ENCODE measurements at regions of chr18 and their contacts with region 1.

Region 1: GRCh38 chr18:50009773-50010335 is 185.1 kb downstream of the MYO5B start:
- DNase-seq: peak; percentile 71
- H3K4me3 ChIP-seq: no peak overlapping the region
- H3K27ac ChIP-seq: no peak overlapping the region
- H3K4me1 ChIP-seq: no peaks in the 10 kb centered on the region
- H3K27me3 ChIP-seq: no peaks in the 10 kb centered on the region
- CTCF ChIP-seq: peak; percentile 43 to 83 (median 60)
- EP300 ChIP-seq: no peak
- POLR2A ChIP-seq: no peak

Region 2: GRCh38 chr18:49907346-49907929 is 102.4 kb before region 1 on chr18:
- in situ Hi-C with region 1: no loop called
- intact Hi-C with region 1: no loop called
- DNase-seq: no peak
- H3K4me3 ChIP-seq: no peak overlapping the region
- H3K27ac ChIP-seq: no peak overlapping the region
- H3K4me1 ChIP-seq: no peaks in the 10 kb centered on the region
- H3K27me3 ChIP-seq: no peaks in the 10 kb centered on the region
- CTCF ChIP-seq: no peak
- EP300 ChIP-seq: no peak
- POLR2A ChIP-seq: no peak

Region 3: GRCh38 chr18:50194631-50195532 is 185.0 kb after region 1 on chr18 and contains the start of gene MYO5B:
- in situ Hi-C with region 1: loop called in 3 of 4 experiments (anchors 10 to 25 kb)
- intact Hi-C with region 1: no loop called
- DNase-seq: peak; percentile 91
- H3K4me3 ChIP-seq: peak within 1 kb of the TSS; percentile 57 to 89 (median 72)
- H3K27ac ChIP-seq: peak within 1 kb of the TSS; percentile 72 to 95 (median 92)
- H3K4me1 ChIP-seq: peaks cover 0 to 30% (median 9%) of the 10 kb centered on the region in 4 donors
- H3K27me3 ChIP-seq: peaks cover 52% of the 10 kb centered on the region
- CTCF ChIP-seq: peak; percentile 13 to 39 (median 36)
- EP300 ChIP-seq: no peak
- POLR2A ChIP-seq: peak; percentile 84
- total RNA-seq, gene MYO5B: 96.7 to 144 (median 114) TPM

Region 4: GRCh38 chr18:50203801-50204604 is 194.1 kb after region 1 on chr18:
- in situ Hi-C with region 1: loop called in 3 of 4 experiments (anchors 10 to 25 kb)
- intact Hi-C with region 1: no loop called
- DNase-seq: peak; percentile 60
- H3K4me3 ChIP-seq: no peak overlapping the region
- H3K27ac ChIP-seq: no peak overlapping the region
- H3K4me1 ChIP-seq: peaks cover 0 to 5% (median 0%) of the 10 kb centered on the region in 4 donors
- H3K27me3 ChIP-seq: peaks cover 6% of the 10 kb centered on the region
- CTCF ChIP-seq: peak; percentile 42 to 64 (median 56)
- EP300 ChIP-seq: no peak
- POLR2A ChIP-seq: no peak

Region 5: DNA sequence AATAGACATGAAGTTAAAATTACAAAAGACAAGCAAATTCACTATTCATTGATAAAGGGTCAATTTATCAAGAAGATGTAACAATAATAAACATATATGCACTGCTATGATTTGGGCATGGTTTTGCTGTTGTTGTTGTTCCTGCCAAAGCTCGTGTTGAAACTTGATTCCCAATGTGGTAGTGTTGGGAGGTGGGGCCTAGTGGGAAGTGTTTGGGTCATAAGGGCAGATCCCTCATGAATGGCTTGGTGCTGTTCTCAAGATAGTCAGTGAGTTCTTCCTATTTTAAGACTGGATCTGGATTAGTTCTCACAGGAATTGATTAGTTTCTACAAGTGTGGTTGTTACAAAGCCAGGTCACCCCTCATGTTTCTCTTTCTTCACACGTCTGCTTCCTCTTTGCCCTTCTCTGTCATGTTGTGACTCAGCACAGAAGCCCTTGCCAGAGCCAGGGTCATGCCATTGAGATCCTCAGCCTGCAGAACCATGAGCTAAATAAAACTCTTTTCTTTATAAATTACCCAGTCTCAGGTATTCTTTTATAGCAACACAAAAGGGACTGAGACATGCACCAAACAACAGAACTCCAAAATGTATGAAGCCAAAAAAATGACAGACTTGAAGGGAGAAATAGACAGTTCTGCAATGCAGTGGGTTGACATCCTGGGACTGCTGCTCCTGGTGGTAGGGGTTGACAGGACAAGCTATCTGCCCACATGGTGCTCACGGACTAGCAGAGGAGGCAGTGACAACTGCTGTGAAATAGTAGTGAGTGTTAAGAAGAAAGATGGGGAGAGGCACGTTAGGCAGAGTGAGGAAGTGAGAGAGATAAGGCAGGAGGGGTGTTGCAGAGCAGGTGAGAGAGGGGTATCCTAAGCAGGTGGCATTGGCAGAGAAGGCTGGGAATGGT is 346.4 kb after region 1 on chr18:
- in situ Hi-C with region 1: loop called in 2 of 4 experiments (anchors 10 to 25 kb)
- intact Hi-C with region 1: no loop called
- DNase-seq: no peak
- H3K4me3 ChIP-seq: no peak overlapping the region
- H3K27ac ChIP-seq: no peak overlapping the region
- H3K4me1 ChIP-seq: no peaks in the 10 kb centered on the region
- H3K27me3 ChIP-seq: no peaks in the 10 kb centered on the region
- CTCF ChIP-seq: no peak
- EP300 ChIP-seq: no peak
- POLR2A ChIP-seq: no peak

Region 6: GRCh38 chr18:50374753-50375391 is 365.0 kb after region 1 on chr18 and contains the start of gene SKA1:
- in situ Hi-C with region 1: loop called in 1 of 4 experiments (anchors 25 kb)
- intact Hi-C with region 1: no loop called
- DNase-seq: peak; percentile 95
- H3K4me3 ChIP-seq: peak within 1 kb of the TSS; percentile 25 to 80 (median 42)
- H3K27ac ChIP-seq: peak within 1 kb of the TSS; percentile 87 to 90 (median 88)
- H3K4me1 ChIP-seq: peaks cover 4 to 23% (median 9%) of the 10 kb centered on the region in 4 donors
- H3K27me3 ChIP-seq: no peaks in the 10 kb centered on the region
- CTCF ChIP-seq: no peak
- EP300 ChIP-seq: no peak
- POLR2A ChIP-seq: peak; percentile 82
- total RNA-seq, gene SKA1: 0.14 to 4.2 TPM in 2 of 4 donors, not detected in the others